Activated B cell treated with CpG ODN at 0.5 μM for 24 hours (primary cell): ENCODE measurements at regions of chr2 and their contacts with region 1.

Region 1: GRCh38 chr2:181457121-181457740 is at the start of gene ITGA4:
- DNase-seq: peak; percentile 87
- ATAC-seq: peak; percentile 78
- H3K4me3 Mint-ChIP-seq: peak within 1 kb of the TSS; percentile 97
- H3K27ac Mint-ChIP-seq: peak within 1 kb of the TSS; percentile 97
- H3K4me1 Mint-ChIP-seq: peaks cover 64% of the 10 kb centered on the region
- H3K27me3 Mint-ChIP-seq: no peaks in the 10 kb centered on the region
- CTCF ChIP-seq: peak; percentile 23
- total RNA-seq, gene ITGA4: 89.2 and 104 TPM in 2 replicates

Region 2: GRCh38 chr2:180334514-180334913 is 1122.7 kb before region 1 on chr2:
- CTCF ChIA-PET with region 1: no interaction called
- POLR2A ChIA-PET with region 1: no interaction called
- intact Hi-C with region 1: loop called (anchors 5 kb)
- DNase-seq: no peak
- ATAC-seq: peak; percentile 92
- H3K4me3 Mint-ChIP-seq: peak overlapping the region; percentile 4
- H3K27ac Mint-ChIP-seq: peak overlapping the region; percentile 64
- H3K4me1 Mint-ChIP-seq: peaks cover 24% of the 10 kb centered on the region
- H3K27me3 Mint-ChIP-seq: no peaks in the 10 kb centered on the region
- CTCF ChIP-seq: no peak

Region 3: GRCh38 chr2:181077128-181077709 is 380.0 kb before region 1 on chr2:
- CTCF ChIA-PET with region 1: interaction called, 3 read pairs
- POLR2A ChIA-PET with region 1: no interaction called
- intact Hi-C with region 1: loop called (anchors 1 kb)
- DNase-seq: no peak
- ATAC-seq: peak; percentile 58
- H3K4me3 Mint-ChIP-seq: no peak overlapping the region
- H3K27ac Mint-ChIP-seq: no peak overlapping the region
- H3K4me1 Mint-ChIP-seq: no peaks in the 10 kb centered on the region
- H3K27me3 Mint-ChIP-seq: no peaks in the 10 kb centered on the region
- CTCF ChIP-seq: no peak

Region 4: GRCh38 chr2:181178823-181179412 is 278.3 kb before region 1 on chr2:
- CTCF ChIA-PET with region 1: interaction called, 6 read pairs
- POLR2A ChIA-PET with region 1: interaction called, 6 read pairs
- intact Hi-C with region 1: loop called (anchors 2 kb)
- DNase-seq: no peak
- ATAC-seq: peak; percentile 82
- H3K4me3 Mint-ChIP-seq: no peak overlapping the region
- H3K27ac Mint-ChIP-seq: no peak overlapping the region
- H3K4me1 Mint-ChIP-seq: peaks cover 7% of the 10 kb centered on the region
- H3K27me3 Mint-ChIP-seq: no peaks in the 10 kb centered on the region
- CTCF ChIP-seq: peak; percentile 42

Region 5: DNA sequence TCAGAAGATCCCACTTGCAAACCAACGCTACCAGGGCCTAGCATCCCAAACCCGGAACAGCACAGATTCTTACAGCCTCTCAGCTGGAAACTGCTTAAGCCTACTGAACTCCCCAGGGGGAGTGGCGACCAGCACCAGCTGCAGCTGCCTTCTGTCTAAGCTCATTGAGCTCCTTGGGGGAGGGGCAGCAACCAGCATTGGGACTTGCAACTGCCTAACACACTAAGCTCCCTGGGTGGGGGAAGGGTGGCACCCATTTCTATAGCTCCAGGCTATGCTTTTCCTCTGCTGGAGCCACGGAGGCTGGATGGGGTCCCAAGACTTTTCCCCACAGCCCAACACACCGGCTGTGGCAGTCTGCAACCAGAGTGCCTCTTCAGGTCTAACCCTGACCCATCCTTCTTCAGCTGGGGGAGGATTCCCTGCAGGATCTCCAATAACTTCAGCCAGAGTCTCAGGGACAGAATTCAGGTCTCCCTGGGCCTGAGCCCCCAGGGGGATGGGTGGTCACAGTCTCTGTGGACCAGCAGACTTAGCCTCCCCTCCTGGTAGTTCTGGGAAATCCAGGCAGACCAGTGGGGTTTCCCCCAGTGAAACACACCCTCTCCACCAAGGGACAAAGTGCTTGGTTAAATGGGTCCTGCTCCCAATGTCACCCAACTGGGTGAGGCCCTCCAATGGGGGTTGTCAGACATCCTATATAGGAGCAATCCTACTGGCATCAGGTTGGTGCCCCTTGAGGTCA is 46.0 kb before region 1 on chr2:
- CTCF ChIA-PET with region 1: interaction called, 11 read pairs
- POLR2A ChIA-PET with region 1: interaction called, 12 read pairs
- intact Hi-C with region 1: loop called (anchors 1 kb)
- DNase-seq: peak; percentile 54
- ATAC-seq: peak; percentile 98
- H3K4me3 Mint-ChIP-seq: peak overlapping the region; percentile 52
- H3K27ac Mint-ChIP-seq: peak overlapping the region; percentile 86
- H3K4me1 Mint-ChIP-seq: peaks cover 88% of the 10 kb centered on the region
- H3K27me3 Mint-ChIP-seq: no peaks in the 10 kb centered on the region
- CTCF ChIP-seq: no peak

Region 6: GRCh38 chr2:181430406-181431118 is 26.7 kb before region 1 on chr2:
- CTCF ChIA-PET with region 1: interaction called, 11 read pairs
- POLR2A ChIA-PET with region 1: interaction called, 6 read pairs
- intact Hi-C with region 1: loop called (anchors 1 kb)
- DNase-seq: no peak
- ATAC-seq: peak; percentile 92
- H3K4me3 Mint-ChIP-seq: no peak overlapping the region
- H3K27ac Mint-ChIP-seq: peak overlapping the region; percentile 82
- H3K4me1 Mint-ChIP-seq: peaks cover 17% of the 10 kb centered on the region
- H3K27me3 Mint-ChIP-seq: no peaks in the 10 kb centered on the region
- CTCF ChIP-seq: no peak

Region 7: DNA sequence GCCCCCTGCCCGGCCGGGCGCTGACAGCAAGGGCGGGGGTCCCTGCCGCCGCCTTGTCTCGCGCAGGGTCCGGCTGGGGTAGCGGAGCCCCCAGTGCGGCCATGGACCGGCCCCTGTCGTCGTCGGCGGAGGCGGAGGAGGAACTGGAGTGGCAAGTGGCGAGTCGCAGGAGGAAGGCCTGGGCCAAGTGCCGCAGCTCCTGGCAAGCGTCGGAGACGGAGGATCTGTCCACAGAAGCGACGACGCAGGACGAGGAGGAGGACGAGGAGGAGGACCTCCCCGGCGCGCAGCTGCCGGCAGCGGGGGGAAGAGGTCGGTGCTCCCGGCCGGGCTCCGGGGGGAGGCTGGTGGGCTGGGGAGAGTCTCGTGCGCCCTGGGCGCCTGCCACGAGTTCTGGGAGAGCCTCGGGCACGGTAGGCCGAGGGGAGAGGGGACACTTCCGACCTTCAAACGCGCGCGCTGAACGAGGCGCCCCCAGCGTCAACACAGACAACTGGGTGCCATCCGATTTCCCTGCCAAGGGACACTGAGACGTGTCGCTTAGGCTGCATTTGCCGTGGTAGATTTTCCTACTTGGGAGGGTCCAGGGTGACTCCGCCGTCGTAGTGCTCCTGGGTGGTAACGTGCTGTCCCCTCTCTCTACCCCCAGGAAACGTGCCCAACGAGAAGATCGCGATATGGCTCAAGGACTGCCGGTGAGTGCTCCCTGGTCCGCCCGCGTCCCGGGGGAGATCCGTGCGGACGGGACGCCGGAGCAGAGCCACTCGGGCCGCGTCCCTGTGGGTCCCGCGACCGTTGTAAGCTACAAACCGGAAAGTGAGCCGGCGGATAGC is 435.0 kb after region 1 on chr2:
- CTCF ChIA-PET with region 1: no interaction called
- POLR2A ChIA-PET with region 1: interaction called, 4 read pairs
- intact Hi-C with region 1: loop called (anchors 5 kb)
- DNase-seq: peak; percentile 63
- ATAC-seq: peak; percentile 49
- H3K4me3 Mint-ChIP-seq: peak overlapping the region; percentile 92
- H3K27ac Mint-ChIP-seq: peak overlapping the region; percentile 65
- H3K4me1 Mint-ChIP-seq: peaks cover 25% of the 10 kb centered on the region
- H3K27me3 Mint-ChIP-seq: peaks cover 9% of the 10 kb centered on the region
- CTCF ChIP-seq: no peak

Region 8: DNA sequence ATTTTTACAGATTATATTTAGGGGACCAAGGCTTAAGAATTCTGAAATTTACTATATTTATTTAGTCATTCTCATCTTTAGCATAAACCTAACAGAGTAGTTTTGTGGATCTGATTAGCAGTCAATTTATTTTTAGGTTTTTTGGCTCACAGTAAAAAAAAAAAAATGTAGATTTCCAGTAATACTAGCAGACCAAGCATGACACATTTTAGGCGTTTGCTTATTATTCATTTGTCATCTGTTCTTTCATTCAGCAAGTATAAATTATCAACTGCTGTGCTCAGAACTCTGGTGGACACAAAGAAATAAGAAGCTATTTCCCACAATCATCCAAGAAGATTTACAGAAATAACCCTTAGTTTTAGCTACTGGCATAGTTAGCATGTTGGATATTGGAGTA is 949.0 kb after region 1 on chr2:
- CTCF ChIA-PET with region 1: no interaction called
- POLR2A ChIA-PET with region 1: no interaction called
- intact Hi-C with region 1: no loop called
- DNase-seq: no peak
- ATAC-seq: no peak
- H3K4me3 Mint-ChIP-seq: no peak overlapping the region
- H3K27ac Mint-ChIP-seq: no peak overlapping the region
- H3K4me1 Mint-ChIP-seq: no peaks in the 10 kb centered on the region
- H3K27me3 Mint-ChIP-seq: no peaks in the 10 kb centered on the region
- CTCF ChIP-seq: no peak